SK-N-SH (cell line): ENCODE measurements at regions of chr1 and their contacts with region 1.

Region 1: GRCh38 chr1:164673584-164674214 is 114.7 kb downstream of the PBX1 start:
- DNase-seq: peak; percentile 53
- H3K4me3 ChIP-seq: peak overlapping the region in 1 of 2 experiments; percentile 39; a peak in 1 of 4 replicates
- H3K27ac ChIP-seq: no peak overlapping the region
- H3K4me1 ChIP-seq: peaks cover 0 to 14% of the 10 kb centered on the region in 2 experiments; a peak in 2 of 4 replicates
- H3K27me3 ChIP-seq: no peaks in the 10 kb centered on the region
- CTCF ChIP-seq: peak; percentile 70
- EP300 ChIP-seq: no peak
- RAD21 ChIP-seq: peak; percentile 31; the same call in 1 of the 2 replicates

Region 2: GRCh38 chr1:164561472-164561871 is 112.2 kb before region 1 on chr1:
- CTCF ChIA-PET with region 1: no interaction called
- POLR2A ChIA-PET with region 1: no interaction called
- DNase-seq: no peak
- H3K4me3 ChIP-seq: peak overlapping the region; percentile 76 to 88; a peak in 3 of 4 replicates
- H3K27ac ChIP-seq: peak overlapping the region in 1 of 2 experiments; percentile 68; a peak in 1 of 4 replicates
- H3K4me1 ChIP-seq: peaks cover 4 to 14% of the 10 kb centered on the region in 2 experiments; a peak in 1 of 4 replicates
- H3K27me3 ChIP-seq: no peaks in the 10 kb centered on the region
- CTCF ChIP-seq: no peak
- EP300 ChIP-seq: no peak
- RAD21 ChIP-seq: no peak

Region 3: GRCh38 chr1:164689672-164690598 is 16.2 kb after region 1 on chr1:
- CTCF ChIA-PET with region 1: interaction called, 13 read pairs
- POLR2A ChIA-PET with region 1: no interaction called
- DNase-seq: peak; percentile 70
- H3K4me3 ChIP-seq: no peak overlapping the region
- H3K27ac ChIP-seq: peak overlapping the region in 1 of 2 experiments; percentile 5; a peak in 1 of 4 replicates
- H3K4me1 ChIP-seq: peaks cover 6 to 9% of the 10 kb centered on the region in 2 experiments; a peak in 2 of 4 replicates
- H3K27me3 ChIP-seq: no peaks in the 10 kb centered on the region
- CTCF ChIP-seq: no peak
- EP300 ChIP-seq: peak in 1 of 2 experiments; percentile 52; a peak in 2 of 4 replicates
- RAD21 ChIP-seq: no peak

Region 4: DNA sequence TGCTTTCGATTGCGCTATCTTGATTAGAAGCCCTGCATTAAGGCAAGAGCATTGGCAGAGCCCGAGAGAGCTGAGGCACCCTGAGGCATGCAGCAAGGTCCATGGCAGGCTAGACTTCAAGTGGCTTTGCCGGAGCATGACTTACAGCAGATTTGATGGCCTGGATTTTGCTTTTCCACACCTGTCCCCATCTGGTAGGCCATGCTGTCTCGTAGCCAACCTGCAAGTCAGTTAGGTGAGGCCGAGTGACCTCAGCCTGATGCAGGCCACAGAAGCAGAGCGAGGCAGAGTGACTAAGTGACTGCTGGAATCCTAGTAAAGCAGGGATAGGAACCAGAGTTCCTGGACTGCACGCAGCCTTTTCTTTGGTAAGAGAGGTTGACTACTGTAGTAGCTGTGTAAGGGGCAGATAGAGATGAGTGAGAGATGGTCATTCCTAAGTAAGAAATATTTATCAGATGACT is 34.2 kb after region 1 on chr1:
- CTCF ChIA-PET with region 1: interaction called, 11 read pairs
- POLR2A ChIA-PET with region 1: no interaction called
- DNase-seq: no peak
- H3K4me3 ChIP-seq: no peak overlapping the region
- H3K27ac ChIP-seq: peak overlapping the region; percentile 84 to 91
- H3K4me1 ChIP-seq: peaks cover 15 to 45% of the 10 kb centered on the region in 2 experiments
- H3K27me3 ChIP-seq: no peaks in the 10 kb centered on the region
- CTCF ChIP-seq: no peak
- EP300 ChIP-seq: peak in 1 of 2 experiments; percentile 60; a peak in 1 of 4 replicates
- RAD21 ChIP-seq: no peak